ENCODE measurements at regions of chr22 and their contacts with region 1.

Region 1: DNA sequence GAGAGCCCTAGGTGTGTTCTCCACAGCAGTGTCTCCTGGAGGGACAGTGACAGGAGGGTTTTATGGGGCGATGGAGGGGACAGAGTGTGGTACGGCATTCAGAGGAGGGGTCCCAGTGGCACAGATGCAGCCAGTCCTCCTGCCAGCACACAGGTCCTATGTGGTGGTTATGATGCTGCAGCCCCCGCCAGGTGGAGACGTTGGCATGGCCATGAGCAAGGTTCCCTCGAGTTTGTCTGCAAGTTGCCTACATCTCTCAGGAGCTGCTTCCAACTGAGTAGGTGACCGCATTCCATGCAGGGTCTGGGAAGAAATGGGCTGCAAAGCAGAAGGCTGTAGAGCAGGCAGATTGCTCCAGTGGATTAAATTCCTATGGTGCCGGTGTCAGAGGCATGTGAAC is 646.0 kb downstream of the TBC1D22A start:
- ATAC-seq: no peak
- H3K4me3 ChIP-seq: no peak overlapping the region
- H3K27ac ChIP-seq: no peak overlapping the region
- H3K4me1 ChIP-seq: no peaks in the 10 kb centered on the region

Region 2: DNA sequence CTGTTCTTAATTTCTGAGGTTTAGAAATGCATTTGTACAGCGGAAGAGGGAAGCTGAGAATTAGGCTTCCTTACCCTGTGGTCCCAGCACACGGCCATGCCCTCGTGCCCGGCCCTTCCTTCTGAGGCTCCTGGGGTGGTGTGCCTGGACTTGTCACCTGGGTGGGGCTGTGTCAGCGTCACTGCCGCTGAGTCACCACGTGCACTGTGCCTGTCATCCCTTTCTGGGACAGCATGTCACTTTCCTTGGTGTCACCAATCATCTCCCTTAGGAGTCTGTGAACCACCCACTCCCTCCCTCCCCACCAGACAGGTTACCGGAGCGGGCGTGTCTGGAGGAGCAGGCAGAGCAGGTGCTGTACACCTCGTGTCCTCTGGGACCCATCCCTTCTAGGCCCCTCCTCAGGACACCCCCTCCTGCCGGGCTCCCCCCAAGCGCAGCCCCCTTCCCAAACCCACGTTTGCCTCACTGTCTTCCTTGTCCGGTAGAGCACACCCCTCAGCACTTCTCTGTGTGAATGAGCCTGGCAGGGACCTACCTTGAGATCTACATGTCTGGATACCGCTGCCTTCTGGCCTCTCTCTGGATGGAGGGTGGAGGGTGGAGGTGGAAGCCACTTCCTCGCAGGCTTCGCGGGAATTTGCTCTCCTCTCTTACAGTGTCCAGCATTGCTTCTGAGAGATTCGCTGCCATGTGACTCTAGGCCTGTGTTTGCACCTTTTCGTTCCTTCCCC is 278.3 kb before region 1 on chr22:
- in situ Hi-C with region 1: no loop called
- ATAC-seq: peak in 7 of 8 experiments; percentile 70 to 95 (median 87)
- H3K4me3 ChIP-seq: no peak overlapping the region
- H3K27ac ChIP-seq: no peak overlapping the region
- H3K4me1 ChIP-seq: no peaks in the 10 kb centered on the region

Region 3: DNA sequence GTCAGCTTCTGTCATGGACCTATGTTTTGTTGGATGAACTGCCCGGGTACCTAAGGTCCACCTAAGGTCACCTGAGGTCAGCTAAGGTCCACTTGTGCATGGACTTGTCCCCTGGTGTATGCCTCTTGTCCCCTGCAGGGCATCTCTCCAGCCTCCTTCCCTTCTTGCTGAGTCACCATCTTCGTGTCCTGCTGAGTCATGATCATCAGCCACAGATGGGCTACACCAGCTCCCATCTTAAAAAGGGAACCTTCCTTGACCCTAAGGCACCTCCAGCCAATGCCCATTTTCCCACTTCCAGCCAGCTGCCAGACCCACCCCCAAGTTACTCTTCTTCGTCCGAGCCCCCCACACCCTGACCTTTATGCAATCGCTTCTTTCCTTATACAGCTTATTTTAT is 101.1 kb before region 1 on chr22:
- in situ Hi-C with region 1: loop called in 1 of 9 experiments (anchors 25 kb)
- ATAC-seq: peak in 2 of 8 experiments; percentile 44 to 68
- H3K4me3 ChIP-seq: no peak overlapping the region
- H3K27ac ChIP-seq: no peak overlapping the region
- H3K4me1 ChIP-seq: no peaks in the 10 kb centered on the region

Region 4: GRCh38 chr22:47515384-47516122 is 107.1 kb after region 1 on chr22:
- in situ Hi-C with region 1: loop called in 1 of 9 experiments (anchors 25 kb)
- ATAC-seq: peak in 1 of 8 experiments; percentile 24
- H3K4me3 ChIP-seq: no peak overlapping the region
- H3K27ac ChIP-seq: no peak overlapping the region
- H3K4me1 ChIP-seq: no peaks in the 10 kb centered on the region